GM12878 (cell line): ENCODE measurements at regions of chr18 and their contacts with region 1.

Region 1: GRCh38 chr18:27723168-27723567 is 453.8 kb downstream of the CDH2 start:
- DNase-seq: no peak
- ATAC-seq: no peak
- H3K4me3 ChIP-seq: no peak overlapping the region
- H3K27ac ChIP-seq: no peak overlapping the region
- H3K4me1 ChIP-seq: no peaks in the 10 kb centered on the region
- H3K27me3 ChIP-seq: no peaks in the 10 kb centered on the region
- CTCF ChIP-seq: no peak
- EP300 ChIP-seq: no peak
- POLR2A ChIP-seq: no peak
- RAD21 ChIP-seq: no peak

Region 2: GRCh38 chr18:26926066-26926675 is 797.0 kb before region 1 on chr18:
- CTCF ChIA-PET with region 1: no interaction called
- POLR2A ChIA-PET with region 1: no interaction called
- RAD21 ChIA-PET with region 1: no interaction called
- SMC1A ChIA-PET with region 1: no interaction called
- in situ Hi-C with region 1: no loop called
- intact Hi-C with region 1: no loop called
- DNase-seq: no peak
- ATAC-seq: no peak
- H3K4me3 ChIP-seq: no peak overlapping the region
- H3K27ac ChIP-seq: no peak overlapping the region
- H3K4me1 ChIP-seq: no peaks in the 10 kb centered on the region
- H3K27me3 ChIP-seq: no peaks in the 10 kb centered on the region
- CTCF ChIP-seq: no peak
- EP300 ChIP-seq: no peak
- POLR2A ChIP-seq: no peak
- RAD21 ChIP-seq: no peak

Region 3: GRCh38 chr18:27778441-27778840 is 55.3 kb after region 1 on chr18:
- CTCF ChIA-PET with region 1: no interaction called
- POLR2A ChIA-PET with region 1: no interaction called
- RAD21 ChIA-PET with region 1: no interaction called
- SMC1A ChIA-PET with region 1: no interaction called
- in situ Hi-C with region 1: no loop called
- intact Hi-C with region 1: loop called (anchors 10 kb)
- DNase-seq: no peak
- ATAC-seq: no peak
- H3K4me3 ChIP-seq: no peak overlapping the region
- H3K27ac ChIP-seq: no peak overlapping the region
- H3K4me1 ChIP-seq: no peaks in the 10 kb centered on the region
- H3K27me3 ChIP-seq: no peaks in the 10 kb centered on the region
- CTCF ChIP-seq: peak in 1 of 3 experiments; percentile 5; a peak in 1 of 6 replicates
- EP300 ChIP-seq: no peak
- POLR2A ChIP-seq: no peak
- RAD21 ChIP-seq: no peak